ENCODE measurements at regions of chr16 and their contacts with region 1.

Region 1: GRCh38 chr16:55711959-55712876 is 56.4 kb downstream of the SLC6A2 start:
- DNase-seq: peak; percentile 46 to 54
- H3K4me3 ChIP-seq: no peak overlapping the region
- H3K27ac ChIP-seq: no peak overlapping the region
- H3K4me1 ChIP-seq: no peaks in the 10 kb centered on the region
- H3K27me3 ChIP-seq: no peaks in the 10 kb centered on the region
- CTCF ChIP-seq: peak; percentile 87

Region 2: GRCh38 chr16:55015181-55015913 is 696.9 kb before region 1 on chr16:
- CTCF ChIA-PET with region 1: no interaction called
- POLR2A ChIA-PET with region 1: no interaction called
- intact Hi-C with region 1: no loop called
- DNase-seq: no peak
- H3K4me3 ChIP-seq: no peak overlapping the region
- H3K27ac ChIP-seq: no peak overlapping the region
- H3K4me1 ChIP-seq: no peaks in the 10 kb centered on the region
- H3K27me3 ChIP-seq: no peaks in the 10 kb centered on the region
- CTCF ChIP-seq: no peak

Region 3: DNA sequence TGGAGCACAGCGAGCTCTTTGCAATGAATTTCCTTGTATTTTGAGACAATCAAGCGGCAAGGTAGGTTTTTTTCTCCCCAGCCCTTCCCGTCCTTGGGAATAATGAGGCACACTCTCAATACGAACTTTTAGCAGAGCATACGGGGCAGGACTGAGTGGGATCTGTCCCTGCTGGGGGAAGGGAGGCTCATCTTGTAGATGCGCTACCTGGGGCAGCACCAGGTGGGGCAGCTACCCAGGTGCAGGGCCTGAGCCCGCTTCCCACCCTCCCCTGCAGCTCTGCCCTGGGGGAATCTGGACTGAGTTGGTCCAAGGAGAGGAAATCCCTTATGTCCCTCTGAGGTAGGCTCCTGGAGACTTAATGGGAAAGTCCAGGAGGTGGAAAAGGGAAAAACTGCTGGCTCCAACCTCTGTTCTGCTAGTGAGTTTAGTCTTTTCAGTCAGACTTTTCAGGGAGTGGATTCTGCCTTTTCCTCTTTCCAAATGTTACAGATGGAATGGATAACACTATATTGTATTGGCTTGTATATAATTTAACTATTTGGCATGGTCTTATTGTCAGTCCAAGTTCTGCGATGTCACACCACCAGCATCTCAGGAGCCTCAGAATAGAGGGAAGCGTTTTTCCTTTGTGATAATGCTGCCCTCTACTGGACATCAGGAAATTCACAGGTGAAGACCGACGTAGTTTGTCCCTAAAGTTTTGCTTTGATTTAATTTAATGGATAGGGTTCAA is 130.3 kb after region 1 on chr16:
- CTCF ChIA-PET with region 1: no interaction called
- POLR2A ChIA-PET with region 1: no interaction called
- intact Hi-C with region 1: loop called (anchors 1 kb)
- DNase-seq: peak in 1 of 2 experiments; percentile 18
- H3K4me3 ChIP-seq: no peak overlapping the region
- H3K27ac ChIP-seq: no peak overlapping the region
- H3K4me1 ChIP-seq: peaks cover 3% of the 10 kb centered on the region; the same call in 1 of the 2 replicates
- H3K27me3 ChIP-seq: no peaks in the 10 kb centered on the region
- CTCF ChIP-seq: peak; percentile 90

Region 4: DNA sequence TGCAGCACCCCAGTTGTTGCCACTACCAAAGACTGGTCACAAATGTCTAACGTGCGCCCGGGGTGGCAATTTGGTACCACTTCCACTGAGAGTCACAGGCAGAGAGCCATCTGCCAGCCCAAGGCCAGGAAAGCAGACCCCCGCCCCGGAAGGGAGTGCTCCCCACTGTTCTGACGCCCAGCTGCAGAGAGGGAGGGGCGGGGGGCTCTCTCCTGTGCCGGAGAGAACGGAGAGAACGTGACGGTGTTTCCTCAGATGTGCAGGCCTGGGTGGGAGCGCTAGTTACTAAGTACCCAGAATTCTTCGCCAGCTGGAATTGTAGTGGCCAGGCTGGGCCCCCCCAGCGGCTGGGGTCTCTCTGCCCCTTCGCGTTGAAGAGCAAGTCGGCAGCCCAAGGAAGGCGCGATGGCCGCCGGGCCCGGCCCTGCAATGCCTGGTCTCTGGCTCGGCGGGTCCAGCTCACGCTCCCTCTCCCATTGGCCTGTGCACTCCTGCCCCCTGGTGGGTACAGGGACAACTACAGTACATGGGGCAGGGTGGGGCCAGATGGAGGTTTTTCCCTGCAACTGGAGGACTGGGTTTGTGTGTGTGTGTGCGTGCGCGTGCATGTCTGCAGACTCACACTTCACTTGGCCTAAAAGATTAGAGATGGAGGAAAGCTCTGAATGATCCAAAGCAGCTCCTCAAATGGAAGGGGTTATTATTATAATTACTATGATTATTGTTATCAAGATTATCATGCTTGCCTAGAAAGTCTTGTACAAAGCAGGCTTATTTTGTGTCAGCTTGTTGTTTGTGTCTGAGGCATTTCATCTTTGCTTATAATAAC is 606.0 kb after region 1 on chr16:
- CTCF ChIA-PET with region 1: no interaction called
- POLR2A ChIA-PET with region 1: no interaction called
- intact Hi-C with region 1: loop called (anchors 2 kb)
- DNase-seq: peak; percentile 42 to 72
- H3K4me3 ChIP-seq: no peak overlapping the region
- H3K27ac ChIP-seq: no peak overlapping the region
- H3K4me1 ChIP-seq: peaks cover 11% of the 10 kb centered on the region
- H3K27me3 ChIP-seq: no peaks in the 10 kb centered on the region
- CTCF ChIP-seq: peak; percentile 94

Region 5: DNA sequence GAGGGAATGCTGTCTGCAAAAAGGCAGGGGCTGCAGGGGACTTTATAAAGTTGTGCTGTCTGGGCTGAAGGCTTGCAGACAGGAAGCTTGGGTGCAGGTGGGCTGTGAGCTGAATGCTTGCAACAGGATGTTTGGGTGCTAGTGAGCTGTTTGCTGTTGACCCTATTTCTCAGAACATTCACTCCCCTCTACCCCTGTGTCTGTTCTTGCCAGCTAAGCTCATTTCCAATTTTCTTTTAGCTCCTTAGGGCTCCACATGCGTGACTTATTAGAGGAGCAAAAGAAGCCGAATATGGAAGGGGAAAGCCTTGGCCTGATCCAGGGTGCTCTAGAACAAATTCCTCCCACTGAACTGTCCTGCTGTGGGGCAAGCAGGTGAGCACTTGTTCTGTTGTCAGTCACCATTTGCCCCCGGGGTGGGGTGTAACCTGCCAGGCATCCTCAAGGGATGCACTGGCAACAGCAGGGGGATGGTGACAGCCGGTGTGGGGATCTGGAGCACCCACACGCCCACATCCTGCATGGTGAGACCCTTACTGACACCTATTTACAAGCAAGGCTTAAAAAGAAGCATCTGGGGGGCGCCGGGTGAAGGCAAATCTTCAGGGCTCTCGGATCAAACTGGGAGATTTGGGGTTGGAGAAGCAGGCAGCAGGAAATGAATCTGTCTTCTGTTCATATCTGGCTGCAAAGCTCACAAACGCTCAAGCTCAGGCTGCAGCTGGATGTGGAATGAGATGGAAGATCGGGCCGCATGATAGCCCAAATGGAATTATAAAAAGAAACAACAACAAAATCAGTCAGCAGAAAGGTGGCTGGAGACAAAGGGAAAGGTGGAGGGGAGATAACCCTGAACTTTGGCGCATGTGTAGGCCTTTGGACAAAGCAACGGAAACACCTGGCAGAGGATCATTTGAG is 996.6 kb after region 1 on chr16:
- CTCF ChIA-PET with region 1: no interaction called
- POLR2A ChIA-PET with region 1: no interaction called
- intact Hi-C with region 1: loop called (anchors 10 kb)
- DNase-seq: no peak
- H3K4me3 ChIP-seq: no peak overlapping the region
- H3K27ac ChIP-seq: no peak overlapping the region
- H3K4me1 ChIP-seq: no peaks in the 10 kb centered on the region
- H3K27me3 ChIP-seq: no peaks in the 10 kb centered on the region
- CTCF ChIP-seq: no peak

Region 6: DNA sequence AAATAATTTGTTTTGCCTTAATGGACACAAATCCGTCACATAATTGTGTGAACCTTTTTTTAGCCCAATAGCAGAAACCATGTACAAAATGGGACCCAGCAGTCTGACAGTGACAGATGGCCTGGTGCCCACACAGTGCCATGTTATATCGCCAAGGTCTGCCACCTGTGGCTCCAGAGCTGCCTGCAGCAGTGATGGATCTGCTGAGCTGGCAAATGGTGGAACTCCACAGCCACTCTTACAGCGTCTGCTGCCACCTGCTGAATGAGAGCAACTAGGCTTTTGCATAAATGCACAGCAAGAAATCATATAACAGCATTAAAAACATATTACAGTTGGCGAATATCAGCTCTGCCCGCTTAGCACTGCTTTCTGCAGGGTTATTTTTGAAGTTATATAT is 1077.1 kb after region 1 on chr16:
- CTCF ChIA-PET with region 1: no interaction called
- POLR2A ChIA-PET with region 1: no interaction called
- intact Hi-C with region 1: loop called (anchors 5 kb)
- DNase-seq: peak; percentile 55
- H3K4me3 ChIP-seq: no peak overlapping the region
- H3K27ac ChIP-seq: no peak overlapping the region
- H3K4me1 ChIP-seq: no peaks in the 10 kb centered on the region
- H3K27me3 ChIP-seq: no peaks in the 10 kb centered on the region
- CTCF ChIP-seq: peak; percentile 59

Region 7: DNA sequence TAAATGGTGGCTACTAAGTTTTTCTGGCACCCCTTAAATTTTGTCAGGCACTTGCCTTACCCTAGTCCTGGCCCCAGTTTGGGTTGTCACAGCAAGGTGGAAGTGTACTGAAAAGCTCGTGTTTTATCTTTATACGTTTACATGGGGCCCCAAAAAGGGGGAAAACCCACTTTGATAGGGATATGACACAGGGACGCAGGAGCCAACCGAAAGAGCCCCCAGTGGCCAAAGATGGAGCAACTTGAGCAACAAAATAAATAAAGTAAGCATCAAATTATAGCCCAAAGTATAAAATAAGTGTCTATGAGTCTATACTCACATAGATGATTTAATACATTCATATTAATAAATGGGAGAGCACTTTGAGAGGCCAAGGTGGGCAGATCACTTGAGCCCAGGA is 1244.5 kb after region 1 on chr16:
- CTCF ChIA-PET with region 1: interaction called, 12 read pairs
- POLR2A ChIA-PET with region 1: no interaction called
- intact Hi-C with region 1: no loop called
- DNase-seq: no peak
- H3K4me3 ChIP-seq: no peak overlapping the region
- H3K27ac ChIP-seq: no peak overlapping the region
- H3K4me1 ChIP-seq: no peaks in the 10 kb centered on the region
- H3K27me3 ChIP-seq: no peaks in the 10 kb centered on the region
- CTCF ChIP-seq: no peak

Measured in PC-9 (cell line).